Activated T-helper 1 cell treated with anti-CD3 and anti-CD28 coated beads, Interleukin-12 subunit alpha, Interleukin-12 subunit beta, Interleukin-2, Interleukin-4 antibody, amounts not matched to agents 30 ng/mL and 10 ng/mL and 1 ng/mL, durations not matched to agents 14 hours and 24 hours and 36 hours (primary cell): ENCODE measurements at regions of chr10 and their contacts with region 1.

Region 1: DNA sequence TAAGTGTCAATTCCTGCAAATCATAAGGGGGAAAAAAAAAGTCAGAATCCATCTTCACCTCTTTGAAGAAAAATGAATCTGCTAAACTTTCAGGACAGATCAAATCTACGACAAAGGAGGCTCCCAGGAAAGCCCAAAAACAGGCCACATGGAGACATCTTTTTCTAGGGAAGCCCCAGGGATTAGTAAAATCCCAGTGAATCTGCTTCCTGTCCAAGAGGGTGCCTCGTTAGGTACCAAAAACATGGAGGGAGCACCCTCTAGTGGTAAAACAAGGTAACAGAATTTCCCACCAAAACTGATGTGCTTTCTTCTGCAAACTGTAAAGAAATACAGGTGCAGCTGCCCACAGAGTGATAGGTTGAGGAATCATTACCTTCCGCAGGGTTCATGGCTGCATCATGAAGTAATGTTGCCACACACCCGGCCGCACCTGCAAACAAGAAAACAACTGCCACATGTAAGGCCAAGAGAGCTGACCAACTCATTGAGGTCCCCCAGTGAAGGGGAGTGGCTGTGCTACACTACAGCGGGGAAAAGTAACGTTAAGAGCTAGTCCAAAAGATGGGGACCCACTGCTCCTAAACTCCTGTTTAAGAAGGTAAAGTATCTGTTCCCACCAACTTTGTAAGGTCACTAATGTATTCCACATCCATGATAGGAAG is 7.9 kb downstream of the SLC25A28 start:
- DNase-seq: no peak
- H3K4me3 Mint-ChIP-seq: no peak overlapping the region
- H3K27ac Mint-ChIP-seq: peak overlapping the region; percentile 41
- H3K4me1 Mint-ChIP-seq: peaks cover 33% of the 10 kb centered on the region
- H3K27me3 Mint-ChIP-seq: no peaks in the 10 kb centered on the region

Region 2: DNA sequence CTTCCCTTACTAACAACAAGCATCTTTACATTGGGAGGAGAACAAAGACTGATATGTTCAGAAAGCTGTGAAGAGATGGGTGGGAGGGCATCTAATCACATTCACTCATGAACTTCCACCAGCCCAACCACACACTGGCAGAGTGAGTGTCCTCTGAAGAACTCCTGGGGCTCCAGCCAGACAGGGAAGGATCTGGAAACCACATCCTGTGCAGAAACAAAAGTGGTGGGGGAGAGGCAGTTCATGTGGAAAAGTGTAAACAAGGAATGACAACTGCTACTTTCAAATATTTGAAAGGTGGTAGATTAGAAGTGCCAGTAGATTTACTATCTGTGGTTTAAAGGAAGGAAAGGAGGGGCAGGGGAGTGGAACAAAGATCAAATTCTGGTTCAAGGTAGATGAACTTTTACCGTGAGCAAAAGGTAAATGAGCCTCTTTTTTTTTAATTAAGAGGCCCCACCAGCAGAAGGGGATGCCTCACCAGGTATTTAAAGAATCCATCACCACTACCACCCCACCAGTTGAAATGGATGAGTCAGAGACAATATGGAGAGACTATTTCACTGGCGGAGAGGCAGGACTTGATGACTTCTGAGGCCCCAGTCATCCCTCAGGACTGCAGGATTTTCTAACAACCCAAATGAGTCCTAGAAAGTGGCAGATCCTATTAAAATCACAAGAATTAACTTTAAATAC is 216.4 kb before region 1 on chr10:
- intact Hi-C with region 1: loop called (anchors 1 kb)
- DNase-seq: no peak
- H3K4me3 Mint-ChIP-seq: no peak overlapping the region
- H3K27ac Mint-ChIP-seq: peak overlapping the region; percentile 6
- H3K4me1 Mint-ChIP-seq: peaks cover 7% of the 10 kb centered on the region
- H3K27me3 Mint-ChIP-seq: peaks cover 4% of the 10 kb centered on the region

Region 3: GRCh38 chr10:99435986-99436638 is 176.2 kb before region 1 on chr10:
- intact Hi-C with region 1: loop called (anchors 1 kb)
- DNase-seq: no peak
- H3K4me3 Mint-ChIP-seq: no peak overlapping the region
- H3K27ac Mint-ChIP-seq: no peak overlapping the region
- H3K4me1 Mint-ChIP-seq: peaks cover 13% of the 10 kb centered on the region
- H3K27me3 Mint-ChIP-seq: no peaks in the 10 kb centered on the region

Region 4: DNA sequence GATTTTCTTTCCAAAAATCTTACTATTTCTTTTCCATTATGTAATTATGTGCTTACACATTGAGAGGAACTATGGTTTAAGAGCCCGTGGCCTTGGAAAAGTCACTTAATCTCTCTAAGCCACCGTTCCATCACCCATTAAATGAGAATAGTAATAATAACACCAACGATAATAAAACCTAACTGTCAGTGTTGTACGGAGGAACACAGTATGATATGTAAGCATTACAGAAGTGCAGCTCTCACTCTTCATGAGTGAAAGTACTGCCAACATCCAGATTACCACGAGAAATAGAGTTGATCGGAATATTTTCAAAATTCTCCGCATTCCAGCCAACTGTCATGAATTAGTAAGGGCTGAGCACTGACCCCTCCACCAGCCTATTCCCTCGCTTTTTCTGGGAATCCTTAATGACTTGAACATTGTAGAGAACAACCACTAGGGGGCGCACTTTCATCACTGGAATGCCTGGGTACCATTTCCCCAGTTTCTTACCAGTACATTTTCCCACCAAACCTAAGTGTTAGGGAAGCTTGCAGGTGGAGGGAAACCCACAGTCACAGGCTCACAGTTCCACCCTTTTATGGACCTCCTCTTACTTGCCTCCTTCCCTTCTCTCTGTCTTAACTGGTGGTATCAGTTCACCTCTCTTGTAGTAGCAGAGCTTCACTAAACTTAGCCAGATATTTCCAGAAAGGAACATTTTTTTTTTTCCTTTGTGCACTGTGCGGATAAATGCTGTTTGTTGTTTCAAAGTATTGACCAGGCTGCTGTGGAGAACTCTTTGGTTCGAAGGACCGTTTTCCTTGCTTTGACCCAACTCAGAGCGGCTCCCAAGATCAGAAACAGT is 51.8 kb before region 1 on chr10:
- intact Hi-C with region 1: loop called (anchors 1 kb)
- DNase-seq: peak; percentile 17
- H3K4me3 Mint-ChIP-seq: no peak overlapping the region
- H3K27ac Mint-ChIP-seq: no peak overlapping the region
- H3K4me1 Mint-ChIP-seq: peaks cover 9% of the 10 kb centered on the region
- H3K27me3 Mint-ChIP-seq: peaks cover 14% of the 10 kb centered on the region

Region 5: DNA sequence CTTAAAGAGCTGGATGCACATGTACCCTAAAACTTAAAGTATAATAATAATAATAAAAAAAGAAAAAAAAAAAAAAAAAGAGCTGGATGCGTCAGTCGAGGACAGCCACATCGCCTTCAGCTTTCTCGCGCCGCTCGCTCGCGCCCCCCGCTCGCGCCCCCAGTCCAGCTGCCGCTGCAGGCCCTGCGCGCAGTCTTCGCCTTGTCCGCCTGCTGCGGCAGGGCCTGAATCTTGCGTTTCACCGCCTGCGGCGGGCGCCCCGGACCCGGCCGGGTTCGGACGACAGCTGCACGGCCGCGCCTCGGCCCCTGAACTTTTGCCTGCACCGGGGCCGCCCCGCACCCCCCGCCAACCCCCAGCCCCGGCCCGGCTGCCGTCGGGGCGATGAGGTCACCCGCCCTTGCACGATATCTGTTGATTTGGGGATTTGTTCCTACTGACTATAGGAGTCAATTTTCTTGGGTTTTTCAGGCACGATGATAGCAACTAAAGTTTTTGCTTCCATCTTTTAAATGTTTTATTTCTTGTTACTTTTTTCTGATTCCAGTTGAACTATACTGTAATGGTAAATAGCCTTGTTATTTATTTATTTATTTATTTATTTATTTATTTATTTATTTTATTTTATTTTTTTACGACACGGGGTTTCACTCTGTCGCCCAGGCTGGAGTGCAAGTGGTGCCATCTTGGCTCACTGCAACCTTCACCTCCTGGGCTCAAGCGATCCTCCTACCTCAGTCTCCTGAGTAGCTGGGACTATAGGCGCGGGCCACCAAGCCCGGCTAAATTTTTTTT is 502.9 kb after region 1 on chr10:
- intact Hi-C with region 1: no loop called
- DNase-seq: no peak
- H3K4me3 Mint-ChIP-seq: no peak overlapping the region
- H3K27ac Mint-ChIP-seq: no peak overlapping the region
- H3K4me1 Mint-ChIP-seq: peaks cover 23% of the 10 kb centered on the region
- H3K27me3 Mint-ChIP-seq: peaks cover 12% of the 10 kb centered on the region

Region 6: DNA sequence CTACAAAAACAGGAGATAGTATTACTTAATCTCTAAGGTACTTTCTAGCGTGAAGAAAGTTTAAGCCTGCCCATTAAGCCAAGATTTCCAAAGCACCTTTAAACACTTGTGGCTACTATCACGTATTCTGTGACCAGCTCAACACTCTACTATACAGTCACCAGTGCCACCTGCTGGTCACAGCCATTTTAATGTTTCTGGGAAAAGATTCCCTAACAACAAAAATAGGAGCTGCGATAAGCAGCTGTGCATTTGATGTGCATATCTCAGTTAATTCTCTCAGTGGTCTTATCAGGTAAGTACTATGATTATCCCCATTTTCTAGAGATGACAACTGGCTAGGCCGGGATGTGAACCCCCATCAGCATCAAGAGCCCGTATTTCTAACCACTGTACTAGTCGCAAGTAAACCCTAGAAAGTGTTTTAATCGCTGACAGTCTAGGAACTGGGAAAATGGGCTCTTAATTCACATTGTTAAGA is 906.5 kb after region 1 on chr10:
- intact Hi-C with region 1: no loop called
- DNase-seq: peak; percentile 49
- H3K4me3 Mint-ChIP-seq: no peak overlapping the region
- H3K27ac Mint-ChIP-seq: no peak overlapping the region
- H3K4me1 Mint-ChIP-seq: peaks cover 28% of the 10 kb centered on the region
- H3K27me3 Mint-ChIP-seq: no peaks in the 10 kb centered on the region